IMR-90 (cell line): ENCODE measurements at regions of chr4 and their contacts with region 1.

Region 1: GRCh38 chr4:44684648-44685047 is 6.4 kb downstream of the GUF1 start:
- DNase-seq: no peak
- ATAC-seq: no peak
- H3K4me3 ChIP-seq: no peak overlapping the region
- H3K27ac ChIP-seq: no peak overlapping the region
- H3K4me1 ChIP-seq: no peaks in the 10 kb centered on the region
- H3K27me3 ChIP-seq: no peaks in the 10 kb centered on the region
- CTCF ChIP-seq: no peak
- POLR2A ChIP-seq: no peak
- RAD21 ChIP-seq: no peak

Region 2: GRCh38 chr4:44701037-44701436 is 16.4 kb after region 1 on chr4:
- CTCF ChIA-PET with region 1: interaction called, 3 read pairs
- POLR2A ChIA-PET with region 1: no interaction called
- dilution Hi-C with region 1: no loop called
- in situ Hi-C with region 1: no loop called
- intact Hi-C with region 1: loop called (anchors 2 kb)
- DNase-seq: no peak
- ATAC-seq: no peak
- H3K4me3 ChIP-seq: no peak overlapping the region
- H3K27ac ChIP-seq: no peak overlapping the region
- H3K4me1 ChIP-seq: no peaks in the 10 kb centered on the region
- H3K27me3 ChIP-seq: no peaks in the 10 kb centered on the region
- CTCF ChIP-seq: no peak
- POLR2A ChIP-seq: no peak
- RAD21 ChIP-seq: no peak